CD4-positive, alpha-beta T cell (primary cell): ENCODE measurements at regions of chr11 and their contacts with region 1.

Region 1: DNA sequence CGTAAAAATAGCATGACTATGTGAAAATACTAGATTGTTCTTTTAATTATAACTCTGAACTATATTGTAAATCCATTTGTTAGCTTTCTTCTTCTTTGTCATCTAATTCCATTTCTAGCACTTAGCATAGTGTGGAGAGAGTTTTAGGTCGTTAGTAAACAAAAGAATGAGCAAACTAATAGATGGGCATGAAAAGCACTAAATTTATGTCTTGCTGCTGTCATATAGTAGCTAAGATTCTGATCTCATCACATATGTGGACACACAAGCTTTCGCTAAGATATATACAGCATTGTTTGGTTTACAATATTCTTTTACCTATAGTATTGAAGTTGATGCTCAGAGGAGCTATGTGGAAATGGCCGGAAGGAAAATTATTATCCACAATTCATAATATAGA is 370.5 kb downstream of the CNTN5 start:
- DNase-seq: no peak
- ATAC-seq: no peak
- H3K4me3 ChIP-seq: no peak overlapping the region
- H3K4me3 Mint-ChIP-seq: no peak overlapping the region
- H3K27ac ChIP-seq: no peak overlapping the region
- H3K27ac Mint-ChIP-seq: no peak overlapping the region
- H3K4me1 ChIP-seq: no peaks in the 10 kb centered on the region
- H3K4me1 Mint-ChIP-seq: no peaks in the 10 kb centered on the region
- H3K27me3 ChIP-seq: no peaks in the 10 kb centered on the region
- H3K27me3 Mint-ChIP-seq: no peaks in the 10 kb centered on the region
- CTCF ChIP-seq: no peak

Region 2: DNA sequence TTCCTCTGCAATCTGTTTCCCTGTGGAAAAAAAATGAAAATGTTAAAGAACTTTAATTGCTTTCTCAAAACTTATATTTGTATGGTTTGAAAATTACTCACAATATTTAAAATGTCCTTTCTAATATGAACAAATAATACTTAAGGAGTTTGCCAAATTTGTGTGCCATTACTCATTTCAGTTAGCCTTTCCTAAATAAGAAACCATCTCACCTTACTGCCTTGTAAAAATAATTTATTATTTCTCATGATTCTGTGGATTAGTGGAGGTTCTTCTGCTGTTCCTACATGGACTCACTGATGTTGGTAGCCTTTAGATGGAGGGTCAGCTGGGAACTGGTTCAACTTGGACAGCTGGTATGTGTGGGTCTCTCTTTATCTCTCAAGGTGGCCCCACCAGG is 58.1 kb after region 1 on chr11:
- CTCF ChIA-PET with region 1: no interaction called
- POLR2A ChIA-PET with region 1: no interaction called
- intact Hi-C with region 1: loop called in 1 of 2 experiments (anchors 5 kb)
- DNase-seq: no peak
- ATAC-seq: no peak
- H3K4me3 ChIP-seq: no peak overlapping the region
- H3K4me3 Mint-ChIP-seq: no peak overlapping the region
- H3K27ac ChIP-seq: no peak overlapping the region
- H3K27ac Mint-ChIP-seq: no peak overlapping the region
- H3K4me1 ChIP-seq: no peaks in the 10 kb centered on the region
- H3K4me1 Mint-ChIP-seq: no peaks in the 10 kb centered on the region
- H3K27me3 ChIP-seq: no peaks in the 10 kb centered on the region
- H3K27me3 Mint-ChIP-seq: no peaks in the 10 kb centered on the region
- CTCF ChIP-seq: no peak